ENCODE measurements at regions of chr12 and their contacts with region 1.

Region 1: GRCh38 chr12:49130151-49131050 is 794 bp downstream of the TUBA1B start:
- DNase-seq: peak; percentile 88 to 96 (median 92)
- H3K4me3 ChIP-seq: peak overlapping the region; percentile 69 to 100 (median 98)
- H3K27ac ChIP-seq: peak overlapping the region; percentile 94 to 100 (median 99)
- H3K27me3 ChIP-seq: no peaks in the 10 kb centered on the region
- CTCF ChIP-seq: peak; percentile 74 to 97 (median 93)

Region 2: DNA sequence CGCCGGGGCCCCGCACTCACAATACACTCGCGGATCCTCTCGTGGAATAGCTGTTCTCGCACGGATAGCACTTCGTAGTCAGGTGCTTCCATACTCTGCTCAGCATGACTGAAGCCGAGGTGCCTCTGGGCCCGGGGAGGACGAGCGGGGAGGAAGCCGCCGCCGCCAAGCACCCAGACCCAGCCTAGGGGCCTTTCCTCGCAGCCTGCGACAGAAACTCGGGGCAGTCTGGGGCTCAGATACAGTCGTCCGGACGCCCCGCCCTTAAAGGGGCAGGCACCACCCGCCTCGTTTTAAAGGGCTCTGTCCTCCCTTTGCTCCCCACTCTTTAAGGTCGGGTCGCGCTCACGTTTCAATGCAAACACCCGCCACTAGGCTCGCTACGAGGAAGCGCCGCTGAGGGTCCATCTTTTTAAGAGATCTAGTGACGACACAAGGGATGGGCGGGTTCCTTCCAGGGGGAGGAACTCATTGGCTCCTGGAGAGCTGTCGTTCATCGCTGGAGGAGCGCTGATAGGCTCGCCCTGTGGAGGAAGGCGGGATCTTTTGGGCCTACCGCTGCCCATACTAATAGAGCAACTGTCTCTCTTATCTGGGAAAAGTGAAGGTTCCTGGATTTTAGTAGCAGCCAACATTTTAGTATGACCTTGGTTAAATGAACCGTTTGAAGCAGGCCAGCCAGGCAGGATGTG is 19.8 kb before region 1 on chr12 and contains the start of gene LMBR1L:
- intact Hi-C with region 1: loop called in 1 of 2 experiments (anchors 1 kb)
- DNase-seq: peak; percentile 84 to 98 (median 97)
- H3K4me3 ChIP-seq: peak within 1 kb of the TSS; percentile 69 to 100 (median 97)
- H3K27ac ChIP-seq: peak within 1 kb of the TSS; percentile 69 to 97 (median 92)
- H3K27me3 ChIP-seq: no peaks in the 10 kb centered on the region
- CTCF ChIP-seq: peak in 53 of 56 donors; percentile 4 to 73 (median 50)
- total RNA-seq, gene LMBR1L: 40.9 to 108 (median 65.9) TPM

Region 3: DNA sequence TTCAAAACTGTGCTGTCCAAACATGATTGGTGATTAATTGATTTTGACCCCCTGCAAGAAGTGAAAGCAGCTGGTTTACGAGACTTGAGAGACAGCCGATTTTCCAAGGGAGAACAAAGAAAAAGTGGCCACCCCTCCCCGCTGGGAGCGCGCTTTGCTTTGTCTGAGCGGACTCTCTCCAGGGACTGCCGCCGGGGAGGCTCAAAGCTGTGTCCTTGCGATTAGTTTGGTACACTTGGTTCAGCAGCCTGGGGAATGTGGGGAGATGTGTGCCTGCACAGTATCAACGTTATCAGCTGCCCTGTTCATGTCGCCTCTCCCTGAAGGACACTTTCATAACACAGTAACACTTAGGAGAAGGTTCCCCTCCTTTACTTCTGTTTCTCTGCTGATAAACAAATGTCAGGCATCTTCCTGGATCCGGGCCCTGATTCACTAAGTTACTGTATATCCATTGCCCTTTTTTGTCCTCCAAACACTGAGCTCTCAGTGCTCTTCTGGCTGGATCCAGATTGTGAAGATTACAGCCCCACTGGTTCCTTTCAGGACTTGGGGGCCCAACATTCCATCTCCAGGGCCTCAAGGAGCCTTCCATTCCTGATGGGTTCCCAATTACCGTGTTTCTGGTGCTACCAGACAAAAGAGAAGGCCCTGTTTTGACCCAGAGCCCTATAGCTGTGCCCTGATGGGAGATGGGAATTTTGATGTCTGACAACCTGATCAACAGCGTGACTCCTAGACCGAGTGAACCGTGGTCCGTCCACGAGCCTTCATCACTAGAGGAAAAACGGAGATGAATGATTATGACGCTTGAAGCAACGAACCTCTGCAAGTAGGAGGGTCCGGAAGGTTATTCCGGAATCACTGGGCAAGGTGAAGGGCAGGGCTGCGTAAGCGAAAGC is 102.8 kb after region 1 on chr12:
- intact Hi-C with region 1: loop called (anchors 1 kb)
- DNase-seq: peak; percentile 49 to 88 (median 85)
- H3K4me3 ChIP-seq: peak overlapping the region; percentile 24 to 86 (median 68)
- H3K27ac ChIP-seq: peak overlapping the region; percentile 95 to 100 (median 99)
- H3K27me3 ChIP-seq: no peaks in the 10 kb centered on the region
- CTCF ChIP-seq: peak in 49 of 56 donors; percentile 6 to 63 (median 37)

Measured in dorsolateral prefrontal cortex (tissue), 120 donors.